PC-9 (cell line): ENCODE measurements at regions of chr14 and their contacts with region 1.

Region 1: DNA sequence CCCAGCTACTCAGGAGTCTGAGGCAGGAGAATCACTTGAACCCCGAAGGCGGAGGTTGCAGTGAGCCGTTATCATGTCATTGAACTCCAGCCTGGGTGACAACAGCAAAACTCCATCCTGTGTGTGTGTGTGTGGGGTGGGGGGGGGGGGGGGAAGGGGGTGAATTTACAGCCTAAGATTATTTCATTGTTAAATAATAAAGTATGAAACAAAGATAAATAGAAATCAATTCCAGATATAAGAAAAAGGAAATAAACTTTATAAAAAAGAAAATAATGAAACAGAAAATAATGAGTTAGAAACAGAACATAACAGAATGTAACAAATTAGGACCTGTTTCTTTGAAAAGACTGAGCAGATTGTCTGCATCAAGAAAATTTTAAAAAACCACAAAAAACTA is 83.5 kb downstream of the INSM2 start:
- DNase-seq: no peak
- H3K4me3 ChIP-seq: no peak overlapping the region
- H3K27ac ChIP-seq: no peak overlapping the region
- H3K4me1 ChIP-seq: no peaks in the 10 kb centered on the region
- H3K27me3 ChIP-seq: no peaks in the 10 kb centered on the region
- CTCF ChIP-seq: no peak

Region 2: GRCh38 chr14:35197015-35197414 is 420.5 kb before region 1 on chr14:
- CTCF ChIA-PET with region 1: interaction called, 14 read pairs
- POLR2A ChIA-PET with region 1: no interaction called
- intact Hi-C with region 1: no loop called
- DNase-seq: peak in 1 of 2 experiments; percentile 55
- H3K4me3 ChIP-seq: no peak overlapping the region
- H3K27ac ChIP-seq: no peak overlapping the region
- H3K4me1 ChIP-seq: 0 out of 2 replicates have a peak, but pooled peaks cover 10% of the 10 kb centered on the region
- H3K27me3 ChIP-seq: no peaks in the 10 kb centered on the region
- CTCF ChIP-seq: no peak

Region 3: DNA sequence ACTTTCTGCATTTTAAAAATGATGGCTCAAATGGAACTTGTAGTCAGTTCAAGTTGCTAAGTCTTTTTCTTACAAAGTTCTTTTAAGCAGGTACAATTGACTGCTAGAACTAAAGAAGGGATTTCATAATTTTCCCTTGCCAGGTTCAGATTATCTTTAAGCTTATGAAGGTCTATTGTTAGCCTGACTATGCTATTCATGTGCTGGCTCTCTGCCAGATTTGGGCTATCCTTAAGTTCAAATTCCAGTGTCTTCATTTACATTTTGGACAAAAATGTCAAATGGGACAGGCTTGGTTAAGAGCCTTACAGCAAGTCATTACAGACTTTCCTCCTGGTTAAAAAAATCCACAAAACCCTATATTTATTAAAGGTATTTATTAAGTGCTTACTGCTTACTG is 41.2 kb before region 1 on chr14:
- CTCF ChIA-PET with region 1: no interaction called
- POLR2A ChIA-PET with region 1: no interaction called
- intact Hi-C with region 1: loop called (anchors 5 kb)
- DNase-seq: no peak
- H3K4me3 ChIP-seq: no peak overlapping the region
- H3K27ac ChIP-seq: no peak overlapping the region
- H3K4me1 ChIP-seq: no peaks in the 10 kb centered on the region
- H3K27me3 ChIP-seq: no peaks in the 10 kb centered on the region
- CTCF ChIP-seq: no peak